ENCODE measurements at regions of chr1 and their contacts with region 1.

Region 1: GRCh38 chr1:113072757-113073478 is at the start of gene LRIG2:
- DNase-seq: peak; percentile 94 to 98 (median 96)
- ATAC-seq: peak; percentile 94 to 96
- H3K4me3 Mint-ChIP-seq: peak within 1 kb of the TSS; percentile 93 to 99 (median 98)
- H3K27ac Mint-ChIP-seq: peak within 1 kb of the TSS; percentile 92 to 98 (median 97)
- H3K4me1 Mint-ChIP-seq: peaks cover 20 to 46% (median 38%) of the 10 kb centered on the region in 4 donors
- H3K27me3 Mint-ChIP-seq: no peaks in the 10 kb centered on the region
- polyA plus RNA-seq, gene LRIG2: 2.4 to 8.1 (median 4.0) TPM

Region 2: DNA sequence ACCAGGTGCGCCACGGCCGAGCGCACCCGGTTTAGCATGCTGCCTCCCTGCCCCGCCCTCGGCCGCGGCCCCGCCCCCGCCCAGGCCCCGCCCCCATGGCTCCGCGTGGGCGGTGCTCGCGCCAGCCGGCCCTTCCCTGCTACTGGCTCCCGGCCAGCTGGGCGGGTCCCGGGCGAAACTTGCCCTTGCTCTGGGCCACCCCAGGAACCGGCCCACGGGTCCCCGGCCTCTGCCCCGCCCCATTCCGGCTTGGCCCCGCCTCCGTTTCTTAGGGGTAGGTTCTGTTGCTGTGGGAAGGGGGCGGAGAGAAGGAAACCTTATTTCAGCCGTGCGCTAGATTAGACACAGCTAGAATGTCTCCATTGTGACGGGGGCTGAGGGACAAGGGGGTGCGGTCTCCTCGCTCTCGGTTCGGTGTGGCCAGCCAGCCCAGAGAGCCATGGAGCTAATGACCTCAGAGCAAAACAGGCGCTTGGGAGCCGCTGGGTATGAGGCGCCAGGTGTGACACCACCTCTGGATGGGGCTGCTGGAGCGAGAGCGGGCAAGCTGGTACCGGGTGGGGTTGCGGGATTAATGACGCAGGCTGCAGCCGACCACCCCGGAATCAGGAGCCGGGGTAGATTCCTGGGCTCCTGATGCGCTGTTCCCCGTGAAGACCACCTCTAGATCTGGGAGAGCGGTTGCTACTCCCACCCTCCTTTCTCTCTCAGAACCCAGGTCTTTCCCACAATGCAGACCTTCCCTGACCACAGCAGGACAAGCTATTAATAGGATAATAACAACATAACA is 357.5 kb before region 1 on chr1 and contains the start of gene PPM1J:
- POLR2A ChIA-PET with region 1: interaction called, 25 read pairs
- DNase-seq: peak; percentile 86 to 96 (median 91)
- ATAC-seq: peak; percentile 80 to 82
- H3K4me3 Mint-ChIP-seq: peak within 1 kb of the TSS; percentile 84 to 95 (median 92)
- H3K27ac Mint-ChIP-seq: peak within 1 kb of the TSS; percentile 23 to 94 (median 90)
- H3K4me1 Mint-ChIP-seq: peaks cover 14 to 29% (median 23%) of the 10 kb centered on the region in 4 donors
- H3K27me3 Mint-ChIP-seq: peaks cover 2 to 43% (median 13%) of the 10 kb centered on the region in 5 donors
- polyA plus RNA-seq, gene PPM1J: not detected

Region 3: DNA sequence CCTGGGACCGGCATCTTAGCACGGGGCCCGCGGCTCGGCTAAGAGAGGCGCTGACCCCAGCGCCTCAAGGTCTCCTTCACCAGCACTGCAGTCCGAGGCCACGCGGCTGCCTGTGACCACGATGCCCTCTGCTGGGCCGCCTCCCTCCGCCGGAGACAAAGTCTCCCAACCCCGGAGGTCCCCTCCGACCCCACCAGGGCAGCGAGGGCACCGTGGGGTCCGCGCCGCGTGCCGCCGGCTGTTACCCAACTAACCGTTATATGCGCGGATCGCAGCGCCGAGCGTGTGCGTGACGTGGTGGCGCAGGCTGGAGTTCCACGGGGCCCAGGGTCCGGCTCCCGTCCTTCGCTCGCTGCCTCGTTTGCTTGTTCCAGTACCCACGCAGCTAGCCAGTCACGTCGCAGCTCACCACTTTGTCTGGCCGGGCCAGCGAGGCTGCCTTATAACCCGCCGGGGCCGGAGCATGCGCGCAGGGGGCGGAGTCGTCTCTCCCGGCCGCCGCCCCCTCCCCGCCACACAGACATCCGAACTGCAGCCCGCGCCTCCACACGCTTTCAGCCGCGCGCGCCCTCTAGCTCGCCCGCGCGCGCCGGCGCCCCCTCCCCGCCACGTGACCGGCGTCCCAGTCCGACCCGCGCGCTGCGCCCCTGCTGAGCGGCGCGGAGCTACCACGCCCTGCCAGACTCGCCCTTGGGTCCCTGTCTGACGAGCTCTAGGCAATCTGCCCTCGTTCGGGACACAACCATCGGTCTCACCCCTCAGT is 117.0 kb before region 1 on chr1 and contains the start of gene SLC16A1:
- POLR2A ChIA-PET with region 1: interaction called, 24 read pairs
- DNase-seq: peak; percentile 76 to 91 (median 84)
- ATAC-seq: peak; percentile 79 to 80
- H3K4me3 Mint-ChIP-seq: peak within 1 kb of the TSS; percentile 95 to 99 (median 97)
- H3K27ac Mint-ChIP-seq: peak within 1 kb of the TSS; percentile 80 to 99 (median 96)
- H3K4me1 Mint-ChIP-seq: peaks cover 26 to 59% (median 54%) of the 10 kb centered on the region in 4 donors
- H3K27me3 Mint-ChIP-seq: no peaks in the 10 kb centered on the region
- polyA plus RNA-seq, gene SLC16A1: 8.2 to 16.0 (median 10.7) TPM